ENCODE measurements at regions of chr13 and their contacts with region 1.

Region 1: DNA sequence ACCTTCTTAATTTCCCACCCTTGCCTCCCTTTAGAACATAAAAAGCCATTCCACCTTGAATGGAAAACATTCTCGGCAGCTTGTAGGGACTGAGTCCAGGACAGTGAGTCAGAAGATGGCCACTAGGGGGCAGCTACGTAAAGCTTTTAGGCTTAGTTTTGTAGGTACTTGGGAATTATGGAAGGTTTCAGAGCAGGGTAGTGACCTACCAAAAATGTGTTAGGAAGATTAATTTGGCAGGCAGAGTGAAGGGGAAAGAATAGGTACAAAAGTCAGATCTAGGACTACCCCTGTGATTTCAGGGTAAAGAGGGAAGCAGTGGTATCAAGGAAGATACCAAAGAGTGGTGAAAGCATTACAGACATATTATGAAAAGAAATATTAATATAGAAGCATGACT is 198.4 kb downstream of the NDFIP2 start:
- DNase-seq: peak; percentile 78 to 80
- H3K4me3 ChIP-seq: no peak overlapping the region
- H3K4me3 Mint-ChIP-seq: no peak overlapping the region
- H3K27ac Mint-ChIP-seq: no peak overlapping the region
- H3K4me1 ChIP-seq: 0 out of 2 replicates have a peak, but pooled peaks cover 15% of the 10 kb centered on the region
- H3K4me1 Mint-ChIP-seq: peaks cover 29% of the 10 kb centered on the region
- H3K27me3 ChIP-seq: no peaks in the 10 kb centered on the region
- H3K27me3 Mint-ChIP-seq: no peaks in the 10 kb centered on the region
- CTCF ChIP-seq: peak; percentile 87 to 89

Region 2: DNA sequence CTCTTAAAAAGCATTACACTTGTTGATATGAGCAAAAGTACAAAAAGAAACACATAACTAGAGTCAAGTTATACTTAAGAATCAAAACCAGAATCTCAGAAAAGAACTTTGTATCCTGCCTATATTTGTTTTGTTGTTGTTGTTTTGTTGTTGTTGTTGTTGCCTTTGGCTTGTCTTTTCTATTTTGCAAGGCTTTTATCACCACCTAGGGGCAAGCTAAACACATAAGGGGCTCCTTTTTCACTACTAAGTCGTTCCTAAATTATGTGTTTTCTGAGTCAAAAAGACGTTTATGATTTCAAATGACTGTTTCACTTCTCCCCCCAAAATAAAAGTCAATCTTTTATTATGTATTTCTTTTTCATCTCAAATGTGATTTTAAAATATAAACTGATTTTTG is 523.5 kb before region 1 on chr13:
- CTCF ChIA-PET with region 1: no interaction called
- POLR2A ChIA-PET with region 1: no interaction called
- intact Hi-C with region 1: no loop called
- DNase-seq: no peak
- H3K4me3 ChIP-seq: no peak overlapping the region
- H3K4me3 Mint-ChIP-seq: no peak overlapping the region
- H3K27ac Mint-ChIP-seq: no peak overlapping the region
- H3K4me1 ChIP-seq: no peaks in the 10 kb centered on the region
- H3K4me1 Mint-ChIP-seq: no peaks in the 10 kb centered on the region
- H3K27me3 ChIP-seq: no peaks in the 10 kb centered on the region
- H3K27me3 Mint-ChIP-seq: peaks cover 8% of the 10 kb centered on the region
- CTCF ChIP-seq: no peak

Region 3: DNA sequence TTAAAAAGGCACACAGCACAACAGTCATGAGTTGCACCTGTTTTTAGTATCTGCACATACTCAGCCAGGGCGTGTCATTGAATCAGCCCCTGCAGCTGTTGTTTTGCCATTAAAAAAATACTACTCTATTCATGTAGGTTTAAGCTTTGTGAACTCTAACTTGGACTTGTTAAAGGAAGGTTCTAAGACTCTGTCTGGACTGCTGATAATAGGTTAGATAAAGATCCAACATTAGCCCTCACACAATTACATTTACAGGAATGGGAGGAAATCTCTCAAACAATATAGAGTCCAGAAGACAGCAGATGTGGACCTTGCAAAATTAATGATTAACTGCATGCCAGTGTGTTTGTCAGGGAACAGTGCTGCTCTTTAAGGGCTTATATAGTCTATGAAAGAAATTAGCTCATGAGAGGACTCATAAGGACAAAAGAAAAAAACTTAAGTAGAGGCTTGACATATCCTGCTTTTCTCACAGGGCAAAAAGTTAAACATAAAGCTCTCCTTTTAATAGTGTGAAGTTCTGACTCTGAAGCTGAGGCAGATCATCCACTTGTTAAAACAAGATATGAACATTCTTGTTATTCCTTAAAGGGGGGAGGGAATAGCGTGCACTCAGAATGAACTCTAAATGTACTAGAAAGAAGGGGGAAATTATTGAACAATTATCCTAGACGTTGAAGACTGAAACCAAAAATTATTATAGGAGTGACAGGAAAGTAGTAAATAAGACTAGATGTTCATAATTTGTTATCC is 45.2 kb after region 1 on chr13:
- CTCF ChIA-PET with region 1: interaction called, 3 read pairs
- POLR2A ChIA-PET with region 1: no interaction called
- intact Hi-C with region 1: loop called (anchors 1 kb)
- DNase-seq: peak; percentile 56 to 67
- H3K4me3 ChIP-seq: no peak overlapping the region
- H3K4me3 Mint-ChIP-seq: peak overlapping the region; percentile 58
- H3K27ac Mint-ChIP-seq: peak overlapping the region; percentile 28
- H3K4me1 ChIP-seq: peaks cover 25% of the 10 kb centered on the region
- H3K4me1 Mint-ChIP-seq: peaks cover 15% of the 10 kb centered on the region
- H3K27me3 ChIP-seq: no peaks in the 10 kb centered on the region
- H3K27me3 Mint-ChIP-seq: no peaks in the 10 kb centered on the region
- CTCF ChIP-seq: no peak

Region 4: GRCh38 chr13:79918620-79919019 is 239.3 kb after region 1 on chr13:
- CTCF ChIA-PET with region 1: no interaction called
- POLR2A ChIA-PET with region 1: no interaction called
- intact Hi-C with region 1: loop called (anchors 10 kb)
- DNase-seq: no peak
- H3K4me3 ChIP-seq: no peak overlapping the region
- H3K4me3 Mint-ChIP-seq: no peak overlapping the region
- H3K27ac Mint-ChIP-seq: no peak overlapping the region
- H3K4me1 ChIP-seq: no peaks in the 10 kb centered on the region
- H3K4me1 Mint-ChIP-seq: peaks cover 6% of the 10 kb centered on the region
- H3K27me3 ChIP-seq: no peaks in the 10 kb centered on the region
- H3K27me3 Mint-ChIP-seq: no peaks in the 10 kb centered on the region
- CTCF ChIP-seq: no peak

Region 5: DNA sequence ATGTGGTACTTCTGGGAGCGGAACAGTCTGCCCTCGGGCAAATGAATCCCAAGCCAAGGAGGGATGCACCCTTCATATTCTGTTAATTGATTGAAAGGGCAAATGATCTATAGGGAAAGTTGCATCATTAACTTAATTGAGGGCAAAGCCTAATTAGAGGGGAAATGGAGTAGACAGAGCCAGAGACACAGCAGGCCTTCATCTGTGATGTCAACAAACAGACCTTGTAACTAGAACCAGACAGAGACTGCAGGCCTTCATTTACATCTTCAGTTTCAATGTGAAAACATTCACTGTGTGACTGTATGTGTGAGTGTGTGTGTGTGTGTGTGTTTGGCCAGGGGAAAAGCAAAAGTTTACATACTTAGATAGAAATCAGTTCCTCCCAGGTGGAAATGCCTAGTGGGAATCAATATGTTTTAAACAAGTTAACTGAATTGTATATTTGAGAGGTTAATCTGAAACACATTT is 535.2 kb after region 1 on chr13:
- CTCF ChIA-PET with region 1: no interaction called
- POLR2A ChIA-PET with region 1: no interaction called
- intact Hi-C with region 1: loop called (anchors 10 kb)
- DNase-seq: no peak
- H3K4me3 ChIP-seq: no peak overlapping the region
- H3K4me3 Mint-ChIP-seq: no peak overlapping the region
- H3K27ac Mint-ChIP-seq: no peak overlapping the region
- H3K4me1 ChIP-seq: peaks cover 18% of the 10 kb centered on the region
- H3K4me1 Mint-ChIP-seq: peaks cover 16% of the 10 kb centered on the region
- H3K27me3 ChIP-seq: no peaks in the 10 kb centered on the region
- H3K27me3 Mint-ChIP-seq: no peaks in the 10 kb centered on the region
- CTCF ChIP-seq: no peak

Region 6: GRCh38 chr13:80928241-80928640 is 1248.9 kb after region 1 on chr13:
- CTCF ChIA-PET with region 1: no interaction called
- POLR2A ChIA-PET with region 1: no interaction called
- intact Hi-C with region 1: loop called (anchors 5 kb)
- DNase-seq: no peak
- H3K4me3 ChIP-seq: no peak overlapping the region
- H3K4me3 Mint-ChIP-seq: no peak overlapping the region
- H3K27ac Mint-ChIP-seq: no peak overlapping the region
- H3K4me1 ChIP-seq: no peaks in the 10 kb centered on the region
- H3K4me1 Mint-ChIP-seq: no peaks in the 10 kb centered on the region
- H3K27me3 ChIP-seq: no peaks in the 10 kb centered on the region
- H3K27me3 Mint-ChIP-seq: no peaks in the 10 kb centered on the region
- CTCF ChIP-seq: no peak

Measured in Caco-2 (cell line).